WTC11 (cell line): ENCODE measurements at regions of chr22 and their contacts with region 1.

Region 1: GRCh38 chr22:42444077-42444904 is 12.1 kb upstream of the NFAM1 start:
- DNase-seq: peak; percentile 95
- ATAC-seq: peak; percentile 81
- H3K4me3 Mint-ChIP-seq: peak overlapping the region; percentile 63
- H3K27ac Mint-ChIP-seq: no peak overlapping the region
- H3K4me1 Mint-ChIP-seq: peaks cover 41% of the 10 kb centered on the region
- H3K27me3 Mint-ChIP-seq: peaks cover 20% of the 10 kb centered on the region
- CTCF ChIP-seq: peak; percentile 74

Region 2: DNA sequence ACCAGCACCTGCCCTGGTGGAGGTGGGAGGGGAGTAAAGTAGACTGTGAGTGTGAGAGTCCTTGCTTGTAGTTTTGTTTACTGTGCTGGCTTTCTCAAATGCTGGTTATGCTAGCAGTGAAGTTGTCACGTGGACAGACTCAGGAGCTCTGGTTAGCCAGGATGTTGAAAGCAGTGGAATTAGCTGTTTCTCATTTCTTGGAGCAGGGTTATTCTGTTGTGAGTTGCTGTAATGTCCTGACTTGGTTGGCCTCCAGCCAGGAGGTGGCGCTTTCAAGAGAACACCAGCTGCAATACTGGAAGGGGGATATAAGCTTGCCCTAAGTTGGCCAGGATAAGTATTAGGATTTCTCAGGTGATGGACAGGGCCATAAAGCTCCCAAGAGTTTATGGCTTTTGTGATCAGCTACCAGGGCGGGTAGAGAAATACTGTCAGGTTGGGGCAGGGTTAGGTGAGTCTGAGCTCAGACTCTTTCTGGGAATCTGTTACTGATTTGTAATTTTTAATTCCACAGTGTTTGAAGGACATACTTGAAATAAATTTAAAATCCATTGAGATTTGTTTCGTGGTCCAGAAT is 327.4 kb before region 1 on chr22:
- CTCF ChIA-PET with region 1: interaction called, 54 read pairs
- POLR2A ChIA-PET with region 1: no interaction called
- DNase-seq: peak; percentile 62
- ATAC-seq: peak; percentile 72
- H3K4me3 Mint-ChIP-seq: no peak overlapping the region
- H3K27ac Mint-ChIP-seq: no peak overlapping the region
- H3K4me1 Mint-ChIP-seq: peaks cover 11% of the 10 kb centered on the region
- H3K27me3 Mint-ChIP-seq: peaks cover 31% of the 10 kb centered on the region
- CTCF ChIP-seq: no peak

Region 3: GRCh38 chr22:42294034-42294985 is 150.0 kb before region 1 on chr22:
- CTCF ChIA-PET with region 1: interaction called, 22 read pairs
- POLR2A ChIA-PET with region 1: no interaction called
- DNase-seq: peak; percentile 89
- ATAC-seq: peak; percentile 77
- H3K4me3 Mint-ChIP-seq: peak overlapping the region; percentile 47
- H3K27ac Mint-ChIP-seq: no peak overlapping the region
- H3K4me1 Mint-ChIP-seq: peaks cover 68% of the 10 kb centered on the region
- H3K27me3 Mint-ChIP-seq: 0 out of 2 replicates have a peak, but pooled peaks cover 2% of the 10 kb centered on the region
- CTCF ChIP-seq: no peak

Region 4: GRCh38 chr22:42360348-42360747 is 83.9 kb before region 1 on chr22:
- CTCF ChIA-PET with region 1: interaction called, 12 read pairs
- POLR2A ChIA-PET with region 1: interaction called, 3 read pairs
- DNase-seq: no peak
- ATAC-seq: no peak
- H3K4me3 Mint-ChIP-seq: no peak overlapping the region
- H3K27ac Mint-ChIP-seq: peak overlapping the region; percentile 47; the same call in 1 of the 2 replicates
- H3K4me1 Mint-ChIP-seq: peaks cover 20% of the 10 kb centered on the region
- H3K27me3 Mint-ChIP-seq: peaks cover 8% of the 10 kb centered on the region; the same call in 1 of the 2 replicates
- CTCF ChIP-seq: no peak

Region 5: DNA sequence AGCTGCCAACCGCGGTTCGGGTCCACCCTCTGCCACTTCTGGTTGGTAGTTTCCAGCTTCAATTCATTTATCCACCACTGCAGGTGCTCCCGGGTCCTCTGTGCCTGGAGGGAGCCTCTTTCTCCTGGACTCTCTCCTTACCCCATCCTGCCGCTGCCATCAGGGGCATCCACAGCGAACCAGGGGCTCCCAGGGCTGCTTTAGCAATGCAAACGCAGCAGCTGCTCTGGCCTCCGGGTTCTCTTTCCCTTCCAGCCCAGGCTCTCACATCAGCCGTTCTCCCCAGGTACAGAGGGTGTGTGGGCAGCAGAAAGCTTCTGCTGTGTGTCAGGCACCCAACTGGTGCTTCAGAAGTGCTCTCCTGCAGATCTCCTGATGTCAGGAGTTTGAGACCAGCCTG is 40.0 kb before region 1 on chr22:
- CTCF ChIA-PET with region 1: interaction called, 15 read pairs
- POLR2A ChIA-PET with region 1: interaction called, 5 read pairs
- DNase-seq: peak; percentile 47
- ATAC-seq: peak; percentile 22
- H3K4me3 Mint-ChIP-seq: no peak overlapping the region
- H3K27ac Mint-ChIP-seq: no peak overlapping the region
- H3K4me1 Mint-ChIP-seq: peaks cover 37% of the 10 kb centered on the region
- H3K27me3 Mint-ChIP-seq: peaks cover 6% of the 10 kb centered on the region; the same call in 1 of the 2 replicates
- CTCF ChIP-seq: no peak

Region 6: GRCh38 chr22:42473484-42474193 is 29.3 kb after region 1 on chr22:
- CTCF ChIA-PET with region 1: interaction called, 25 read pairs
- POLR2A ChIA-PET with region 1: no interaction called
- DNase-seq: no peak
- ATAC-seq: peak; percentile 76
- H3K4me3 Mint-ChIP-seq: no peak overlapping the region
- H3K27ac Mint-ChIP-seq: no peak overlapping the region
- H3K4me1 Mint-ChIP-seq: peaks cover 4% of the 10 kb centered on the region
- H3K27me3 Mint-ChIP-seq: peaks cover 21% of the 10 kb centered on the region
- CTCF ChIP-seq: peak; percentile 31

Region 7: GRCh38 chr22:42587588-42588175 is 143.4 kb after region 1 on chr22:
- CTCF ChIA-PET with region 1: no interaction called
- POLR2A ChIA-PET with region 1: no interaction called
- DNase-seq: no peak
- ATAC-seq: no peak
- H3K4me3 Mint-ChIP-seq: no peak overlapping the region
- H3K27ac Mint-ChIP-seq: no peak overlapping the region
- H3K4me1 Mint-ChIP-seq: no peaks in the 10 kb centered on the region
- H3K27me3 Mint-ChIP-seq: no peaks in the 10 kb centered on the region
- CTCF ChIP-seq: no peak